ENCODE measurements at regions of chr2 and their contacts with region 1.

Region 1: GRCh38 chr2:157061799-157062198 is 195.7 kb upstream of the GALNT5 start:
- DNase-seq: peak; percentile 51
- ATAC-seq: peak; percentile 89
- H3K4me3 ChIP-seq: no peak overlapping the region
- H3K27ac ChIP-seq: no peak overlapping the region
- H3K4me1 ChIP-seq: peaks cover 8% of the 10 kb centered on the region; the same call in 1 of the 2 replicates
- H3K27me3 ChIP-seq: peaks cover 0 to 2% of the 10 kb centered on the region in 2 experiments; a peak in 2 of 4 replicates
- CTCF ChIP-seq: no peak
- EP300 ChIP-seq: peak in 1 of 2 experiments; percentile 71; a peak in 2 of 4 replicates
- POLR2A ChIP-seq: no peak
- RAD21 ChIP-seq: no peak

Region 2: DNA sequence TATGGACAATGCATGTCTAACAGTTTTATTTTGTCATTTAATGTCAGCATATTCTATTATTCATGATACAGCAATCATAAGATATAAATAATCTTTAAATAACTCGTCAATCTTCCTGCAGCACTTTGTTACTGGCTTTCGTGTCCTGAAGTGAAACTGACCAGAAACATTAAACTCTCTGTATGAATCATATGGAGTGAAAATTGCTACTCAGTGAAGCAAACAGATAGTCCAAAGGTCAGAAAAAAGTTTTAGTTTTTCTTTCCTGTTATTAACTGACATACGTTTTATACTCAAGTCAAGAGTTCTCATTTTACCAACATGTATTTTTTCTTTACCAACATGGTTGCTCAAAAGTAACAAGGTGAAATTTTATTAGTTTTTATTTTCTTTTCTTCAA is 88.9 kb after region 1 on chr2:
- CTCF ChIA-PET with region 1: no interaction called
- POLR2A ChIA-PET with region 1: no interaction called
- RAD21 ChIA-PET with region 1: interaction called, 5 read pairs
- SMC1A ChIA-PET with region 1: interaction called, 9 read pairs
- in situ Hi-C with region 1: no loop called
- intact Hi-C with region 1: loop called (anchors 1 kb)
- DNase-seq: peak; percentile 68
- ATAC-seq: peak; percentile 93
- H3K4me3 ChIP-seq: no peak overlapping the region
- H3K27ac ChIP-seq: peak overlapping the region; percentile 18; the same call in 1 of the 2 replicates
- H3K4me1 ChIP-seq: peaks cover 10% of the 10 kb centered on the region
- H3K27me3 ChIP-seq: no peaks in the 10 kb centered on the region
- CTCF ChIP-seq: no peak
- EP300 ChIP-seq: peak; percentile 77 to 83; a peak in 2 of 4 replicates
- POLR2A ChIP-seq: no peak
- RAD21 ChIP-seq: no peak